Naive thymus-derived CD8-positive, alpha-beta T cell (primary cell): ENCODE measurements at regions of chr17 and their contacts with region 1.

Region 1: GRCh38 chr17:16415031-16415924 is at the start of gene TRPV2:
- DNase-seq: peak; percentile 23 to 74 (median 52)
- ATAC-seq: peak; percentile 57 to 65
- H3K4me3 Mint-ChIP-seq: peak within 1 kb of the TSS; percentile 93 to 99 (median 98)
- H3K27ac Mint-ChIP-seq: peak within 1 kb of the TSS; percentile 98 to 100 (median 99)
- H3K4me1 Mint-ChIP-seq: peaks cover 12 to 53% (median 51%) of the 10 kb centered on the region in 4 donors
- H3K27me3 Mint-ChIP-seq: no peaks in the 10 kb centered on the region
- polyA plus RNA-seq, gene TRPV2: 87.0 to 109 (median 90.6) TPM

Region 2: GRCh38 chr17:16363749-16364536 is 51.3 kb before region 1 on chr17:
- POLR2A ChIA-PET with region 1: interaction called, 20 read pairs
- DNase-seq: peak; percentile 50 to 87 (median 68)
- ATAC-seq: peak; percentile 88 to 99
- H3K4me3 Mint-ChIP-seq: no peak overlapping the region
- H3K27ac Mint-ChIP-seq: peak overlapping the region in 1 of 10 donors; percentile 3
- H3K4me1 Mint-ChIP-seq: peaks cover 0 to 3% (median 1%) of the 10 kb centered on the region in 4 donors
- H3K27me3 Mint-ChIP-seq: peaks cover 0 to 2% (median 0%) of the 10 kb centered on the region in 5 donors

Region 3: DNA sequence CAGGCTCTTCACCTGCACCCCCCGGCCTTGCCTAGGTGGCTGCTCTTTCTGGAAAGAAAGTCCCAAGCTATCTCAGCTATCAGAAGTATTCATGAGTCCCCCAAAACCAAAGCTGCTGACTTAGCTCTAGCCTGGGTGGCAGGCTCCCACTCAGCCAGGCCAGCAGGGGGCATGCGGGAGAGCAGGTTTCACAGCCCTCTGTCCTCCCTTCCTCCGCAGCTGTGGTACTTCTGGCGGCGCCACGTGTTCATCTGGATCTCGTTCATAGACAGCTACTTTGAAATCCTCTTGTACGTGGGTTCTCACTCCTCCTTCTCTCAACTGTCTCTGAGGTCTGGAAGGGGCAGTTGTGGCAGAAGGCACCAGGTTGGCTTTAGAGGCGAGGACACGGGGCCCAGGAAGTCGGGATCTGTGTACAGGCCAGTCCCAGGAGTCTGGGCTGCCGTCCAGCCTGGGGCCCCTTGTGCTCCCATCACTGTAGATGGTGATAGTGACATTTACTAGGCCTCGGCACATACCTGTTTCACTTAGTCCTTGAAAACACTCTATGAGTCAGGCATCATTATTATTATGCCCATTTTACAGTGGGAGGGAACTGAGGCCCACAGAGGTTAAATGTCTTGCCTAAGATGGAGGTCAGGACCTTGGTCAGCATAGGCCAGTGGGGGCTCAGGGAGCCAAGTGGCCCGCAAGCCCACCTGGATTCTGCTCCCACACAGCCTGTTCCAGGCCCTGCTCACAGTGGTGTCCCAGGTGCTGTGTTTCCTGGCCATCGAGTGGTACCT is 13.0 kb after region 1 on chr17:
- POLR2A ChIA-PET with region 1: interaction called, 13 read pairs
- DNase-seq: peak in 8 of 10 donors; percentile 20 to 69 (median 38)
- ATAC-seq: peak; percentile 70 to 77
- H3K4me3 Mint-ChIP-seq: no peak overlapping the region
- H3K27ac Mint-ChIP-seq: peak overlapping the region in 4 of 10 donors; percentile 20 to 56 (median 34)
- H3K4me1 Mint-ChIP-seq: peaks cover 0 to 6% (median 3%) of the 10 kb centered on the region in 4 donors
- H3K27me3 Mint-ChIP-seq: no peaks in the 10 kb centered on the region

Region 4: GRCh38 chr17:16438557-16439302 is 23.5 kb after region 1 on chr17:
- POLR2A ChIA-PET with region 1: interaction called, 58 read pairs
- DNase-seq: peak; percentile 88 to 98 (median 96)
- ATAC-seq: peak; percentile 89 to 90
- H3K4me3 Mint-ChIP-seq: peak overlapping the region; percentile 98 to 100 (median 99)
- H3K27ac Mint-ChIP-seq: peak overlapping the region; percentile 95 to 99 (median 98)
- H3K4me1 Mint-ChIP-seq: peaks cover 39 to 60% (median 52%) of the 10 kb centered on the region in 4 donors
- H3K27me3 Mint-ChIP-seq: no peaks in the 10 kb centered on the region